Mammary epithelial cell (primary cell): ENCODE measurements at regions of chr1 and their contacts with region 1.

Region 1: GRCh38 chr1:67500413-67500959 is 70.3 kb upstream of the SERBP1 start:
- DNase-seq: peak; percentile 74
- H3K4me3 ChIP-seq: no peak overlapping the region
- H3K27ac ChIP-seq: no peak overlapping the region
- H3K4me1 ChIP-seq: no peaks in the 10 kb centered on the region
- H3K27me3 ChIP-seq: no peaks in the 10 kb centered on the region
- CTCF ChIP-seq: peak; percentile 97 to 100

Region 2: DNA sequence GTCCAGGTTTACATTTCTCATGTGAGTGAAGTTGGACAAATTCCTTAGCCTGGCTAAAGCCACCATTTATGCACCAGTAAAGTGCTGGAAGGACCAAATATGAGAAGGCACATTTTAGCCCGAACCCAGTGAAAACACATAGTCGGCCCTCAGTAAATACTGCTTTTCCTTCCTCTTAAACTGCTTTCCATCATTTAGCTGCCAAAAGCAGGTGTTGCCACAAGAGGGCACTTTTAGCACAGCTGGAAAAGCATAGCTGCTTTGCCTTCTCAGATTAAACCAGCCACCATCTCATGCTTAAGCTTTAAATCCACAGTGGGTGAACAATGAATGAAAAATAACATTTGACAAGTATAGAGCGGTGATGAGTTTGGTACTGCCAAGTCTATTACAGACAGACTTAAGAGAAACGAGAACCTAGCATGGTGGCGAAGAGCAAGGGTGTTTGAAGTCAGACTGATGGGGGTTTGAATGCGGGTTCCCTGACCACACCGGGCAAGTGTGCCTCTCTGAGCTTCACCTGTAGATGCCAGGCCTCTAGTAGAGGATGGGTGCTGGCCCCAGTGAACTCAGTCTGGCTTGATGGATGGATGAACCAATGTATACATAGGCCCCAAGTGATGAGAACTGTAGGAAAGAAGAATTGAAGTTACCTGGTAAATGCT is 504.3 kb before region 1 on chr1:
- CTCF ChIA-PET with region 1: no interaction called
- dilution Hi-C with region 1: no loop called
- in situ Hi-C with region 1: no loop called
- intact Hi-C with region 1: loop called (anchors 5 kb)
- DNase-seq: peak; percentile 54
- H3K4me3 ChIP-seq: no peak overlapping the region
- H3K27ac ChIP-seq: no peak overlapping the region
- H3K4me1 ChIP-seq: no peaks in the 10 kb centered on the region
- H3K27me3 ChIP-seq: no peaks in the 10 kb centered on the region
- CTCF ChIP-seq: peak; percentile 86 to 87

Region 3: DNA sequence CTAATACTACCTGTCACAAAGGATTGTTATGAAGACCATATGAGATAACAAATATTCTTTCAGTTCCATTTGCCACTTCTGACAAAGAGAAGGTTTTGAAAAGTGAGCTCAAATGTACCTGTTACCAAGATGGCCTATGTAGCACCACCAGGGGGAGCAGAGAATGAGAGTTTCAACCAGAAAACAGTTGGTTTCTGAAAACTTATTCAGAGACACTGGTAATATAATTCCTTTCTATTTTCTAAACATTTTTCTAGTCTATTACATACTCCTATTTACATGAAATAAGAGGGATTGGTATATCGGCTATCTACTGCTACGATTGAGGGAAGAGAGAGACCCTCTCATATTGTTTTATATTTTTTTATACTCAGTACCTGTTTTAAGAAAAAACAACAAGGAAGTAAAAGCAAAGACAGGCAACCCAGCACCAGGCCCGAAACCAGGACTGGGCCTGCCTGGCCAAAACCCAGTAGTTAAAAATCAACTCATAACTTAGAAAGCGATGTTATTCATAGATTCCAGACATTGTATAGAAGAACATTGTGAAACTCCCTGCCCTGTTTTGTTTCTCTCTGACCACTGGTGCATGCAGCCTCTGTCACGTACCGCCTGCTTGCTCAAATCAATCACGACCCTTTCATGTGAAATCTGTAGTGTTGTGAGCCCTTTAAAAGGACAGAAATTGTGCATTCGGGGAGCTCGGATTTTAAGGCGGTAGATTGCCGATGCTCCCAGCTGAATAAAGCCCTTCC is 285.9 kb before region 1 on chr1:
- CTCF ChIA-PET with region 1: interaction called, 9 read pairs
- dilution Hi-C with region 1: no loop called
- in situ Hi-C with region 1: no loop called
- intact Hi-C with region 1: loop called (anchors 1 kb)
- DNase-seq: peak; percentile 38
- H3K4me3 ChIP-seq: no peak overlapping the region
- H3K27ac ChIP-seq: no peak overlapping the region
- H3K4me1 ChIP-seq: peaks cover 3% of the 10 kb centered on the region
- H3K27me3 ChIP-seq: no peaks in the 10 kb centered on the region
- CTCF ChIP-seq: peak; percentile 54 to 71

Region 4: DNA sequence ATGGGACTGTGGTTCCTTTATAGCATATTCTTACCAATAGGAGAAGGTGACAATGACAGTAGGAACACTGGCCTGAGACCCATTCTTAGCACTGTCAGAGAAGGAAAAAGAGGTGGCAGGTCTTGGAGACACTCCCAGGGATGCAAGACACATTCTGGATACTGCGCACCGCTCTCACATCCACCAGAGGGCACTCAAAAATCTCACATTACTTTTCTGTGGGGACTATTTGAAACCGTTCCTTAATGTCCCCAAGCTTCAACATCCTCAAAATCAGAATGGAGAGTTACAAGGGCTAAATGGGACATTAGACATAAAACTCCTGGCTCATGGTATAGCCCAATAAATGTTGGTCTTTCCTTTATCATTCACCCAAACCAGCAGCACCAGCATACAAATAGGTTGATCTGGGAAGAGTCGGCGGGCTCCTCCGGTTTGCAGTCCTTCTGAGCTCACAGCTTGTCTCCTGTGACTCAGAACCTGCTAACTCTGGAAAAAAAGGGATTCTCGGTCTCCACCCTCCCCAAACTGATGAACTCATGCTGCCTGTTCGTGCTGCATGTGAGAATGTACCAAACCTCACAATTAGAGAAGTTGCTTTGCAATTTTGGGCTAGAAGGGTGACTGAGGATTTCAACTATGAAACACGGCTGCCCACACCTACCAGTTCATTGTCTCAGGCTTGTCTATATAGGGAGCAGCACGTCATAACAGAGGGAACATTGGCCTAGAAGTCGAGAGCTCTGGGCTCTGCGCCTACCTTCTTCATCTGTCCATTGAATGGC is 152.6 kb before region 1 on chr1:
- CTCF ChIA-PET with region 1: interaction called, 3 read pairs
- dilution Hi-C with region 1: loop called (anchors 5 kb)
- in situ Hi-C with region 1: loop called (anchors 5 to 10 kb)
- intact Hi-C with region 1: loop called (anchors 1 kb)
- DNase-seq: peak; percentile 85
- H3K4me3 ChIP-seq: peak overlapping the region in 2 of 3 experiments; percentile 5 to 9
- H3K27ac ChIP-seq: peak overlapping the region; percentile 60
- H3K4me1 ChIP-seq: peaks cover 37% of the 10 kb centered on the region
- H3K27me3 ChIP-seq: no peaks in the 10 kb centered on the region
- CTCF ChIP-seq: peak; percentile 81 to 87